ENCODE measurements at regions of chr3 and their contacts with region 1.

Region 1: DNA sequence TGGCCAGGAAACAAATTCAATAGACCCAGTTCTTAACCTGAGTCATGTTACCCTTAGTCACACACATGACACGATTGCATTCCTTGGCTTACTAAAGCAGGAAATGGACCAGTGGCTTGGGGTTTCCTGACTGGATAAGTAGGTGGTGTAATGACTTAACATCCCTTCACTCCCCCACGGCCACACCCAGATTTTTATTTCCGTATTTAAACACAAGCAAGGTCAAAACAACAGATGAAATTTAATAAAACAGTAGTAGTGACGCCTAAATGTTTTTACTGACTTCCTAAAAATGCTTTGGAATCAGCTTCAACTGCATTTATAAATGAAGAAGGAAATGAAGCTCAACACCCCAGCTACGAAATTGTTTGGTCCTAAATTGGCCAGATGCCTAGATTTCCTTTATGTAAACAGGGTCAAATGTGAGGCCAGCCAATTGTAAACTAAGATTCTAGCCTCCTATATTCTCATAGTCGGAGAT is 324.3 kb downstream of the CHST2 start:
- DNase-seq: no peak

Region 2: GRCh38 chr3:143121241-143122088 is 322.4 kb before region 1 on chr3:
- intact Hi-C with region 1: loop called (anchors 10 kb)
- DNase-seq: no peak

Region 3: DNA sequence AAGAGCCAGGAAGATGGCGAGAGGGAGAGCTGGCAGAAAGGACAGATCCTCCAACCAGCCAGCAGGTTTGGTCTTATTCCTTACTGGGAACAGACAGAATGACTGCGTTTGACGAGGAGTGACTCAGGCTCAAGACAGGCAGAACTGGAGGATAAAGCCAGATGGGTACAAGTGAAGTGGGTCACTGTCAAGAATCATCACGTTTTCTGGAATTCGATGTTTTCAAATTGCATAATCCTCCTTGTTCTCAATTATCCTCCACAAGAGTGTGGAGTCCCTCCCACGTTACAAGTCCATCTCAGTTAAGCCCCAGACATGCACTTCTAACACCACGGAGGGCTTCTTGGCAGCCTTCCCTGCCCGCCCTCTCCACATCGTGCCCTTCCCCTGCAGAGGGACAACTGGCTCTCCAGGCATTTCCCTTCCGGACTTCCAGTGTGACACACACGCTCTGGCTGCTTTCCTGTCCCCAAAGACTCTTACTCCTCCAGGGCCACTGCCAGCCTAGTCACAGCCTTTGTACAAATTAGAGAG is 141.2 kb before region 1 on chr3:
- intact Hi-C with region 1: loop called (anchors 10 kb)
- DNase-seq: peak; percentile 82

Region 4: GRCh38 chr3:143352850-143353550 is 90.9 kb before region 1 on chr3:
- intact Hi-C with region 1: loop called (anchors 10 kb)
- DNase-seq: no peak

Region 5: DNA sequence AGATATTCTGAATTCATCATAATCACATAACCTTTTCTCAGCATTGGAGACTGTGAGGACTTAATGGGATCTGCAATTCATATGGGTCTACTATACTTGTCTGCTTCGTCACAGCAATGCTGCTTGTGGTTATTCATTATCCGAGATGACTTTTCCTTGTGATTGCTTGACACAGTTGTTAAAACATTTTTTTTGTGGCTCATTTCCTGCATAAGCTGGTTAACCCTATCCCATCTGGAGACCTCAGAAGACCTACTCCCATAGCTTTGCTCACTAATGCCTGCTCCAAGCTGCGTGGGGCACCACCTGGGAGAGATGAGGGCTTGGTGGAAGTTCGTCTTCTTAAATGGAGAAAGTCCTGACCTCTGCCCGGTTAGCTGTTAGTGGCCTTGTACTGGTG is 36.5 kb after region 1 on chr3:
- intact Hi-C with region 1: no loop called
- DNase-seq: no peak

Measured in cardiac septum (tissue), 1 donor.